CD4-positive, alpha-beta memory T cell (primary cell): ENCODE measurements at regions of chr16 and their contacts with region 1.

Region 1: GRCh38 chr16:59611556-59611955 is 877.4 kb upstream of the GOT2 start:
- DNase-seq: no peak
- H3K4me3 ChIP-seq: no peak overlapping the region
- H3K4me3 Mint-ChIP-seq: no peak overlapping the region
- H3K27ac ChIP-seq: no peak overlapping the region
- H3K27ac Mint-ChIP-seq: no peak overlapping the region
- H3K4me1 ChIP-seq: no peaks in the 10 kb centered on the region
- H3K4me1 Mint-ChIP-seq: no peaks in the 10 kb centered on the region
- H3K27me3 ChIP-seq: no peaks in the 10 kb centered on the region
- H3K27me3 Mint-ChIP-seq: no peaks in the 10 kb centered on the region

Region 2: GRCh38 chr16:59597269-59597668 is 14.3 kb before region 1 on chr16:
- CTCF ChIA-PET with region 1: no interaction called
- POLR2A ChIA-PET with region 1: no interaction called
- intact Hi-C with region 1: loop called (anchors 2 kb)
- DNase-seq: no peak
- H3K4me3 ChIP-seq: no peak overlapping the region
- H3K4me3 Mint-ChIP-seq: no peak overlapping the region
- H3K27ac ChIP-seq: no peak overlapping the region
- H3K27ac Mint-ChIP-seq: no peak overlapping the region
- H3K4me1 ChIP-seq: no peaks in the 10 kb centered on the region
- H3K4me1 Mint-ChIP-seq: no peaks in the 10 kb centered on the region
- H3K27me3 ChIP-seq: no peaks in the 10 kb centered on the region
- H3K27me3 Mint-ChIP-seq: no peaks in the 10 kb centered on the region